IMR-90 (cell line): ENCODE measurements at regions of chr1 and their contacts with region 1.

Region 1: DNA sequence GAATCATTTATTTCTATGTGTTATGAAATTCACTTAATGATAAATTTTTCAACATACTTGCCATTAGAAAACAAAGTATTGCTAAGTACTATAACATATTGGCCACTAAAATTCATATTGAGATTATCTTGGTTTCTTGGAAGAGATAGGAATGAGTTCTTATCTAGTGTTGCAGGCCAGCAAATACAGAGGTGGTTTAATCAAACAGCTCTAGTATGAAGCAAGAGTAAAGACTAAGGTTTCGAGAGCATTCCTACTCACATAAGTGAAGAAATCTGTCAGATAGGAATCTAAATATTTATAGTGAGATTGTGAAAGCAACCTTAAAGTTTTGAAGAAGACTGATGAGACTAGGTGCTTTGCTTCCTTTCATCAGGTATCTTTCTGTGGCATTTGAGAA is 37.9 kb upstream of the FOXE3 start:
- DNase-seq: peak; percentile 62
- ATAC-seq: peak; percentile 46
- H3K4me3 ChIP-seq: no peak overlapping the region
- H3K27ac ChIP-seq: no peak overlapping the region
- H3K4me1 ChIP-seq: peaks cover 8% of the 10 kb centered on the region
- H3K27me3 ChIP-seq: no peaks in the 10 kb centered on the region
- CTCF ChIP-seq: no peak
- POLR2A ChIP-seq: no peak
- RAD21 ChIP-seq: no peak

Region 2: DNA sequence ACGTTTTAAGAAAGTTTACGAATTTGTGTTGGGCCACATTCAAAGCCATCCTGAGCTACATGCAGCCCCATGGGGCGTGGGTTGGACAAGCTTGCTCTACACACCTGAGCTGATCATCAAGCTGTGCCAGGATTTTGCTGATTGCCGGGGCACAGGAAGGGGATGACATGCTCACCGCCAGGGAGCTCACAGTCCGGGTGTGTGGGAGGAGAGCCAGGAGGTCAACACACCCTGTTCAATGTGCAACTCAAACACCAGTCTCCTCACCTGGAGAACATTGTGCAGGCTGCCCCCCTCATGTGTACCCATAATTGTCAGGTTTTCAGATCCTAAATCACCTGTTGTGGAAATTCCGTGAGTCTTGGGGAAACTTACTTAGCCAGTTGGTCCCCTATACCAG is 437.8 kb before region 1 on chr1:
- CTCF ChIA-PET with region 1: no interaction called
- POLR2A ChIA-PET with region 1: no interaction called
- dilution Hi-C with region 1: no loop called
- in situ Hi-C with region 1: no loop called
- intact Hi-C with region 1: no loop called
- DNase-seq: no peak
- ATAC-seq: no peak
- H3K4me3 ChIP-seq: no peak overlapping the region
- H3K27ac ChIP-seq: no peak overlapping the region
- H3K4me1 ChIP-seq: no peaks in the 10 kb centered on the region
- H3K27me3 ChIP-seq: no peaks in the 10 kb centered on the region
- CTCF ChIP-seq: no peak
- POLR2A ChIP-seq: no peak
- RAD21 ChIP-seq: no peak

Region 3: GRCh38 chr1:47262787-47263413 is 115.2 kb before region 1 on chr1:
- CTCF ChIA-PET with region 1: no interaction called
- POLR2A ChIA-PET with region 1: no interaction called
- dilution Hi-C with region 1: no loop called
- in situ Hi-C with region 1: no loop called
- intact Hi-C with region 1: loop called (anchors 5 kb)
- DNase-seq: peak; percentile 38
- ATAC-seq: peak; percentile 73
- H3K4me3 ChIP-seq: no peak overlapping the region
- H3K27ac ChIP-seq: no peak overlapping the region
- H3K4me1 ChIP-seq: no peaks in the 10 kb centered on the region
- H3K27me3 ChIP-seq: no peaks in the 10 kb centered on the region
- CTCF ChIP-seq: peak; percentile 56
- POLR2A ChIP-seq: no peak
- RAD21 ChIP-seq: peak; percentile 51

Region 4: DNA sequence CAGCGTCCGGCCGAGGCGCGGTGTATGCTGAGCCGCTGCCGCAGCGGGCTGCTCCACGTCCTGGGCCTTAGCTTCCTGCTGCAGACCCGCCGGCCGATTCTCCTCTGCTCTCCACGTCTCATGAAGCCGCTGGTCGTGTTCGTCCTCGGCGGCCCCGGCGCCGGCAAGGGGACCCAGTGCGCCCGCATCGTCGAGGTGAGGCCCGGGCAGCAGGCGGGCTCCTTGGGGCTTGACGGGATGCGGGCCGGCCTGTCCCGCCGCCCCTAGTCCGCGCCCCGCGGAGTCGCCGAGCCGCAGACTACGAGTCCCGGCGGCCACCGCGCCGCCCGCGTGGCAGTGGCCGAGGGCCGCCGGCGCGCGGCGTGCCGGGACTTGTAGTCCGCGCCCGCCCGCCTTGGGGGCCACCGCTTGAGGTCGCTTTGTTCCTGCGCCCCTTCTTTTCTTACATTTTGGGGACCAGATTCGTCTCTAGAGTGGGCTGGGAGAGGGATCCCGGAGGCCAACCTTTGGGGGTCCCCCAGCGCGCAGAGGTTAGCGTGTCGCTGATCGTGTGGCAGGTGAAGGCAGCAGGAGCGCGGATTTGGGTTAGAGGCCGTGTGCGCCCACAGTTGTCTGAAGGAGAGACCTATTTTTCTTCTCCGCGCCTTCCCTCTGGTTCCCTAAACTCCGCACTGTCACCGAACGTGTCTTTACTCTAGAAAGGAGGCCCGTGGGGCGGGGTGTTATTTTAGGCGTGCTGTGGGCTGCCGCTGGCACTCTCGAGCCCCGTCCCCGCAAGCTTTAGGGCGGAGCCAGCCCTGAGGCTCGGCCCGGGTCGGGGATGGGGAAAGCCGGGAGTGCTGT is 44.0 kb before region 1 on chr1:
- CTCF ChIA-PET with region 1: no interaction called
- POLR2A ChIA-PET with region 1: no interaction called
- dilution Hi-C with region 1: no loop called
- in situ Hi-C with region 1: no loop called
- intact Hi-C with region 1: loop called (anchors 5 kb)
- DNase-seq: peak; percentile 74
- ATAC-seq: peak; percentile 92
- H3K4me3 ChIP-seq: peak overlapping the region; percentile 86
- H3K27ac ChIP-seq: peak overlapping the region; percentile 88
- H3K4me1 ChIP-seq: peaks cover 6% of the 10 kb centered on the region
- H3K27me3 ChIP-seq: no peaks in the 10 kb centered on the region
- CTCF ChIP-seq: peak; percentile 7; the same call in 1 of the 2 replicates
- POLR2A ChIP-seq: peak; percentile 59
- RAD21 ChIP-seq: no peak